ENCODE measurements at regions of chr16 and their contacts with region 1.

Region 1: GRCh38 chr16:57167953-57168352 is 17.9 kb downstream of the PSME3IP1 start:
- DNase-seq: no peak
- ATAC-seq: peak; percentile 67
- H3K4me3 Mint-ChIP-seq: no peak overlapping the region
- H3K27ac Mint-ChIP-seq: no peak overlapping the region
- H3K4me1 Mint-ChIP-seq: peaks cover 14% of the 10 kb centered on the region
- H3K27me3 Mint-ChIP-seq: no peaks in the 10 kb centered on the region
- CTCF ChIP-seq: no peak

Region 2: GRCh38 chr16:56576585-56577293 is 591.2 kb before region 1 on chr16:
- CTCF ChIA-PET with region 1: no interaction called
- POLR2A ChIA-PET with region 1: no interaction called
- intact Hi-C with region 1: loop called (anchors 5 kb)
- DNase-seq: peak; percentile 67
- ATAC-seq: peak; percentile 96
- H3K4me3 Mint-ChIP-seq: no peak overlapping the region
- H3K27ac Mint-ChIP-seq: no peak overlapping the region
- H3K4me1 Mint-ChIP-seq: no peaks in the 10 kb centered on the region
- H3K27me3 Mint-ChIP-seq: peaks cover 3% of the 10 kb centered on the region
- CTCF ChIP-seq: no peak

Region 3: DNA sequence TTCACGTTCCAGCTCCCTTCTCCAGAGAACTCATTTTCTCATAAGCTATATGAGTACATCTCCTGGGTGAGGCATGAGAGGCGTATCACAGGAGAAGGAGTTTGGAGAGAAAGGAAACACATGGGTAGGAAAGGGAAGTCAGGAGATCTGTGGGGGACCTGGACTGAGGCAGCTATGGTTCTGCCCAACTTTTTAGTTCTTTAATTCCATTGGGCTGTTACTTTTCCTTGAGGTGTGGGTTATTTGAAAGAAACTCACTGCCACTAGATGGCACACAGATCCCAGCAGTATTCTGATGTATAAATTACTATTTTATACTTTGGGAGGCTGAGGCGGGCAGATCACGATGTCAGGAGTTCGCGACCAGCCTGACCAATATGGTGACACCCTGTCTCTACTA is 374.5 kb before region 1 on chr16:
- CTCF ChIA-PET with region 1: no interaction called
- POLR2A ChIA-PET with region 1: no interaction called
- intact Hi-C with region 1: loop called (anchors 1 kb)
- DNase-seq: no peak
- ATAC-seq: no peak
- H3K4me3 Mint-ChIP-seq: no peak overlapping the region
- H3K27ac Mint-ChIP-seq: no peak overlapping the region
- H3K4me1 Mint-ChIP-seq: peaks cover 2% of the 10 kb centered on the region
- H3K27me3 Mint-ChIP-seq: no peaks in the 10 kb centered on the region
- CTCF ChIP-seq: no peak

Region 4: DNA sequence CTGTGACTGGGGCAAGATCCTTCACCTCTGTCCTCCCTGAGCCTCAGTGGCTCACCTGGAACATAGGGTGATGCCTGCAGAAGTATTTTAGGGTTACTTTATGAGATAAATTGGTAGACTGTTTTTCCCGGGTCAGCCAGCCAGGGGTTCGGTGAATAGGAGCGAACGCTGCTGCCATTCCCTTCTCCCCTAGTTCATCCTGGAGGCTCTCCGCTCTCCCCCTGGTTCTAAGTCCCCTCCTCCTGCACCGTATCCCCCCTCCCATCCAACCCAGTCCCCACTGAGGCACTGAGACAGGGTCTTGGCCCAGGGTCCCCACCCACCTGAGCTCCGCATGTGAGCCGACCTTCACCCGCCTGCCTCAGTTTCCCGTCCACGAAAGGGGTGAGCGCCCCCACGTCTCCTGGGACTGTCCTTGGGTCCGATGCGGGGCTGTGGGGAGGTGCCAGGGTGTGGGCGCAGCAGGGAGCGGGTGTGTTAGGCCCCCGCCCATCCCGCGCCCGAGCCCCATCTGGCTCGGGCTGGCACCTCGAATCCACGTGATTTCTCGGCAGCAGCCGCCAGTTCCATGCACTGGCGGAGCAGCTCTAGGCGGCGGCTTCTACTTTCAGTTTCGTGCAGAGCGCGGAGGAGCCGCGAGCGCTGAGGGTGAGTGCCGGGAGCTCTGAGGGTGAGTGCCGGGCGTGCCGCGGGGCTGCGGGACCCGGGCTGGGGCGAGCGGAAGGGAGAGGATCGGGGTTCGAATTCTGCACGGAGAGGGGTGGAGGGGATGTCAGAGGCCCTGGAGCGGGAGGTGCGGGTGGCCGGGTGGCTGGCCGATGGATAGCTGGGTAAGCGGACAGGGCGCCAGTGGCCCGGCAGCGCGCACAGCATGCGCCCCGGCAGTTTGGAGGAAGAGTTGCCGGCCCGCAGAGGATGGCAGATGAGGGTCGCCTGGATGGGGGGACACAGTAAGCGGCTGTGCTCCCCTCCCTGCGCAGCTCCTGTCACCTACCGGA is 178.7 kb before region 1 on chr16 and contains the start of gene NLRC5:
- CTCF ChIA-PET with region 1: no interaction called
- POLR2A ChIA-PET with region 1: no interaction called
- intact Hi-C with region 1: no loop called
- DNase-seq: peak; percentile 76
- ATAC-seq: peak; percentile 89
- H3K4me3 Mint-ChIP-seq: peak within 1 kb of the TSS; percentile 96
- H3K27ac Mint-ChIP-seq: peak within 1 kb of the TSS; percentile 93
- H3K4me1 Mint-ChIP-seq: peaks cover 86% of the 10 kb centered on the region
- H3K27me3 Mint-ChIP-seq: no peaks in the 10 kb centered on the region
- CTCF ChIP-seq: no peak
- total RNA-seq, gene NLRC5: 296 and 372 TPM in 2 replicates

Region 5: DNA sequence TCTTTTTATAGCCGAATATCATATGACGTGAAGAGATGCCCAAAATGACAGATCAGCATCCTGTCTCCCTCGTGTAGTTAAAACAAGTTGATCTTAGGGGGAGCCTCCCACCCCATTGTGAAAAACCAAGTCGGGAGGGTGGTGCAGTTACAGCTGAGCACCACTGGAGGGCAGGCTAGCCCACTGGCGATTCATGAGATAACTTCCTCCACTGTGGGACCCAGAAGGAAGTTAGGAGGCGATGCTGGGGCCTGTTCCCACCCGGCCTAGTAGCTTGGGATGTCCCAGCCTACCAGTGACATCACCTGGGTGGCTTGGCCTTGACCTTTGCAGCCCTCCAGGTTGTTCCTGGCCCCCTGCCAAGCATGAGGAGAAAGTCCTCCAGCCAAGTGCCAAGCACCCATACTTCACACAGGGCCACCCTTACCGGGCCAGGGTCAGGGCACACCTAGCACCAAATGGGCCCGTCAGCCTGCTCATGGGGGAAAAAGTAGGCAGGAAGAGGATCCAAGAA is 83.6 kb before region 1 on chr16:
- CTCF ChIA-PET with region 1: interaction called, 7 read pairs
- POLR2A ChIA-PET with region 1: no interaction called
- intact Hi-C with region 1: loop called (anchors 1 kb)
- DNase-seq: peak; percentile 50
- ATAC-seq: peak; percentile 89
- H3K4me3 Mint-ChIP-seq: no peak overlapping the region
- H3K27ac Mint-ChIP-seq: peak overlapping the region; percentile 57
- H3K4me1 Mint-ChIP-seq: peaks cover 8% of the 10 kb centered on the region
- H3K27me3 Mint-ChIP-seq: no peaks in the 10 kb centered on the region
- CTCF ChIP-seq: peak; percentile 77

Region 6: GRCh38 chr16:57091975-57092785 is 75.8 kb before region 1 on chr16 and contains the start of gene CPNE2:
- CTCF ChIA-PET with region 1: no interaction called
- POLR2A ChIA-PET with region 1: no interaction called
- intact Hi-C with region 1: loop called (anchors 2 kb)
- DNase-seq: peak; percentile 52
- ATAC-seq: peak; percentile 55
- H3K4me3 Mint-ChIP-seq: peak within 1 kb of the TSS; percentile 81
- H3K27ac Mint-ChIP-seq: no peak within 1 kb of the TSS
- H3K4me1 Mint-ChIP-seq: peaks cover 13% of the 10 kb centered on the region
- H3K27me3 Mint-ChIP-seq: peaks cover 24% of the 10 kb centered on the region
- CTCF ChIP-seq: no peak
- total RNA-seq, gene CPNE2: 7.4 and 8.3 TPM in 2 replicates

Measured in activated B cell treated with CpG ODN at 0.5 μM for 24 hours (primary cell).